ENCODE measurements at regions of chr6 and their contacts with region 1.

Region 1: GRCh38 chr6:39347906-39348585 is 25.5 kb upstream of the KCNK16 start:
- DNase-seq: peak in 7 of 9 donors; percentile 16 to 63 (median 31)
- ATAC-seq: peak; percentile 75
- H3K4me3 ChIP-seq: no peak overlapping the region
- H3K4me3 Mint-ChIP-seq: no peak overlapping the region
- H3K27ac ChIP-seq: no peak overlapping the region
- H3K27ac Mint-ChIP-seq: peak overlapping the region in 2 of 9 donors; percentile 18 to 60
- H3K4me1 ChIP-seq: no peaks in the 10 kb centered on the region
- H3K4me1 Mint-ChIP-seq: peaks cover 0 to 4% (median 0%) of the 10 kb centered on the region in 7 donors
- H3K27me3 ChIP-seq: no peaks in the 10 kb centered on the region
- H3K27me3 Mint-ChIP-seq: peaks cover 0 to 5% (median 0%) of the 10 kb centered on the region in 5 donors

Region 2: GRCh38 chr6:38871741-38872568 is 476.1 kb before region 1 on chr6:
- CTCF ChIA-PET with region 1: no interaction called
- POLR2A ChIA-PET with region 1: no interaction called
- intact Hi-C with region 1: no loop called
- DNase-seq: peak; percentile 11 to 66 (median 38)
- ATAC-seq: peak; percentile 52
- H3K4me3 ChIP-seq: no peak overlapping the region
- H3K4me3 Mint-ChIP-seq: no peak overlapping the region
- H3K27ac ChIP-seq: no peak overlapping the region
- H3K27ac Mint-ChIP-seq: peak overlapping the region in 1 of 9 donors; percentile 4
- H3K4me1 ChIP-seq: peaks cover 9 to 23% of the 10 kb centered on the region in 2 donors
- H3K4me1 Mint-ChIP-seq: peaks cover 10 to 47% (median 24%) of the 10 kb centered on the region in 7 donors
- H3K27me3 ChIP-seq: no peaks in the 10 kb centered on the region
- H3K27me3 Mint-ChIP-seq: peaks cover 0 to 10% (median 7%) of the 10 kb centered on the region in 5 donors

Region 3: GRCh38 chr6:40308533-40309306 is 960.7 kb after region 1 on chr6:
- CTCF ChIA-PET with region 1: no interaction called
- POLR2A ChIA-PET with region 1: no interaction called
- intact Hi-C with region 1: loop called in 1 of 2 experiments (anchors 5 kb)
- DNase-seq: peak in 6 of 9 donors; percentile 14 to 70 (median 40)
- ATAC-seq: peak; percentile 58
- H3K4me3 ChIP-seq: no peak overlapping the region
- H3K4me3 Mint-ChIP-seq: no peak overlapping the region
- H3K27ac ChIP-seq: no peak overlapping the region
- H3K27ac Mint-ChIP-seq: peak overlapping the region in 1 of 9 donors; percentile 58
- H3K4me1 ChIP-seq: no peaks in the 10 kb centered on the region
- H3K4me1 Mint-ChIP-seq: peaks cover 0 to 12% (median 0%) of the 10 kb centered on the region in 7 donors
- H3K27me3 ChIP-seq: no peaks in the 10 kb centered on the region
- H3K27me3 Mint-ChIP-seq: peaks cover 34 to 48% (median 44%) of the 10 kb centered on the region in 5 donors

Region 4: GRCh38 chr6:40845553-40845952 is 1497.5 kb after region 1 on chr6:
- CTCF ChIA-PET with region 1: no interaction called
- POLR2A ChIA-PET with region 1: no interaction called
- intact Hi-C with region 1: loop called in 1 of 2 experiments (anchors 5 kb)
- DNase-seq: peak in 4 of 9 donors; percentile 6 to 23 (median 16)
- ATAC-seq: no peak
- H3K4me3 ChIP-seq: no peak overlapping the region
- H3K4me3 Mint-ChIP-seq: no peak overlapping the region
- H3K27ac ChIP-seq: no peak overlapping the region
- H3K27ac Mint-ChIP-seq: no peak overlapping the region
- H3K4me1 ChIP-seq: no peaks in the 10 kb centered on the region
- H3K4me1 Mint-ChIP-seq: peaks cover 0 to 4% (median 0%) of the 10 kb centered on the region in 7 donors
- H3K27me3 ChIP-seq: no peaks in the 10 kb centered on the region
- H3K27me3 Mint-ChIP-seq: peaks cover 11 to 45% (median 28%) of the 10 kb centered on the region in 5 donors

Region 5: DNA sequence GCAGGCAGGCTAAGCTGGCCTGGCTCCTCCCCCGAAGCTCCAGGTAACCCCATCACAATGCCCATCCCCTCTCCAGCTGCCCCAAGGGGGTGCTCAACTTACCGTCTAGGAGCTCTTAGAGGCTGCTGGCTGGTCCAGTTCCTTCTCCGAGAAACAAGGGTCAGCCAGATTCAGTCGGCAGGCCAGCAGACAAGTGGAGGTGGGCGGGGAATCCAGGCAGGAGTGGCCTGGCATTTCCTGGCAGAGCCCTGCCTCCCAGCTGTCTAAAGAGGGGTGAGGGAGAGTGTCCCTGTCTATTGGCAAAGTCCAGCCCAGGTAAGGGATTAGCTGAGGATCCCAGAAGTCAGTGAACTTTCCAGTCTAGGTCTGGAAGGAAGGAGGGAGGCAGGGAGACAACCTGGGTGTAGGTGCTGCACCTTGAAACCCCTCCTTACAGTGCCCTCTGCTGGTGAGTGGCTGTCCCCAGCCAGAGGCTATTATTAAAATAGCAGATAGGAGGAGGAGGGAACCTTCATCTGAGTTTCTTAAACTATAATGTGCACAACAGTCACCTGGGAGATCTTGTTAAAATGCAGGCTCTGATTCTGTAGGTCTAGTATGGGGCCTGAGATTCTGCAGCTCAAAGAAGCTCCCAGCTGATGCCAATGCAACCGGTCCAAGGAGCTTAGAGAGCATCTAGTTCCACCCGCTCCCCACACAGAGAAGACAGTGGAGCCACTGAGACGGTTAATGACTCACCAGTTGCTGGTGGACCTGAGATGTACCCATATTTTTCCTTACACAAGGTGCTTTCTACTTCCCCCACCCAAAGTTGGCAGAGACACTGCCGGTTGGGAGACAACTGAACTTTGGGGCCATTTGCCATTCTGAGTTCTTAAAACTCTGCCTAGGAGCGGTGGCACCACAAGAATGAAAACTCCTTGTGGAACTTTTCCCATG is 1691.3 kb after region 1 on chr6 and contains the start of gene UNC5CL:
- CTCF ChIA-PET with region 1: no interaction called
- POLR2A ChIA-PET with region 1: no interaction called
- intact Hi-C with region 1: loop called in 1 of 2 experiments (anchors 1 kb)
- DNase-seq: peak; percentile 11 to 57 (median 50)
- ATAC-seq: peak; percentile 77
- H3K4me3 ChIP-seq: no peak within 1 kb of the TSS
- H3K4me3 Mint-ChIP-seq: no peak within 1 kb of the TSS
- H3K27ac ChIP-seq: no peak within 1 kb of the TSS
- H3K27ac Mint-ChIP-seq: peak within 1 kb of the TSS in 2 of 9 donors; percentile 2 to 36
- H3K4me1 ChIP-seq: no peaks in the 10 kb centered on the region
- H3K4me1 Mint-ChIP-seq: peaks cover 0 to 20% (median 0%) of the 10 kb centered on the region in 7 donors
- H3K27me3 ChIP-seq: no peaks in the 10 kb centered on the region
- H3K27me3 Mint-ChIP-seq: no peaks in the 10 kb centered on the region
- total RNA-seq, gene UNC5CL: 2.2 to 7.2 (median 4.3) TPM

Region 6: GRCh38 chr6:41066867-41067304 is 1718.8 kb after region 1 on chr6:
- CTCF ChIA-PET with region 1: interaction called, 4 read pairs
- POLR2A ChIA-PET with region 1: no interaction called
- intact Hi-C with region 1: loop called in 1 of 2 experiments (anchors 5 kb)
- DNase-seq: peak; percentile 26 to 62 (median 51)
- ATAC-seq: no peak
- H3K4me3 ChIP-seq: no peak overlapping the region
- H3K4me3 Mint-ChIP-seq: no peak overlapping the region
- H3K27ac ChIP-seq: no peak overlapping the region
- H3K27ac Mint-ChIP-seq: peak overlapping the region in 6 of 9 donors; percentile 1 to 79 (median 28)
- H3K4me1 ChIP-seq: peaks cover 5 to 9% of the 10 kb centered on the region in 2 donors
- H3K4me1 Mint-ChIP-seq: peaks cover 21 to 46% (median 38%) of the 10 kb centered on the region in 7 donors
- H3K27me3 ChIP-seq: no peaks in the 10 kb centered on the region
- H3K27me3 Mint-ChIP-seq: no peaks in the 10 kb centered on the region

Region 7: GRCh38 chr6:41182069-41183034 is 1834.3 kb after region 1 on chr6:
- CTCF ChIA-PET with region 1: no interaction called
- POLR2A ChIA-PET with region 1: no interaction called
- intact Hi-C with region 1: loop called in 1 of 2 experiments (anchors 5 kb)
- DNase-seq: peak in 8 of 9 donors; percentile 34 to 68 (median 60)
- ATAC-seq: peak; percentile 85
- H3K4me3 ChIP-seq: no peak overlapping the region
- H3K4me3 Mint-ChIP-seq: no peak overlapping the region
- H3K27ac ChIP-seq: no peak overlapping the region
- H3K27ac Mint-ChIP-seq: peak overlapping the region in 5 of 9 donors; percentile 0 to 68 (median 5)
- H3K4me1 ChIP-seq: peaks cover 0 to 17% of the 10 kb centered on the region in 2 donors
- H3K4me1 Mint-ChIP-seq: peaks cover 20 to 43% (median 34%) of the 10 kb centered on the region in 7 donors
- H3K27me3 ChIP-seq: no peaks in the 10 kb centered on the region
- H3K27me3 Mint-ChIP-seq: peaks cover 0 to 10% (median 3%) of the 10 kb centered on the region in 5 donors

Measured in naive thymus-derived CD4-positive, alpha-beta T cell (primary cell).